ENCODE measurements at regions of chr19 and their contacts with region 1.

Region 1: GRCh38 chr19:18304458-18305310 is 18.2 kb downstream of the LSM4 start:
- DNase-seq: peak; percentile 83 to 97
- H3K4me3 ChIP-seq: peak overlapping the region; percentile 60
- H3K27ac ChIP-seq: peak overlapping the region; percentile 98 to 100
- H3K4me1 ChIP-seq: peaks cover 41 to 77% of the 10 kb centered on the region in 2 donors
- H3K27me3 ChIP-seq: no peaks in the 10 kb centered on the region
- CTCF ChIP-seq: no peak

Region 2: GRCh38 chr19:17215125-17215971 is 1089.3 kb before region 1 on chr19 and contains the start of gene USE1:
- intact Hi-C with region 1: no loop called
- DNase-seq: peak; percentile 66 to 96
- H3K4me3 ChIP-seq: peak within 1 kb of the TSS; percentile 72 to 74
- H3K27ac ChIP-seq: peak within 1 kb of the TSS; percentile 84 to 88
- H3K4me1 ChIP-seq: peaks cover 0 to 17% of the 10 kb centered on the region in 2 donors
- H3K27me3 ChIP-seq: no peaks in the 10 kb centered on the region
- CTCF ChIP-seq: no peak
- total RNA-seq, gene USE1: 234 TPM

Region 3: DNA sequence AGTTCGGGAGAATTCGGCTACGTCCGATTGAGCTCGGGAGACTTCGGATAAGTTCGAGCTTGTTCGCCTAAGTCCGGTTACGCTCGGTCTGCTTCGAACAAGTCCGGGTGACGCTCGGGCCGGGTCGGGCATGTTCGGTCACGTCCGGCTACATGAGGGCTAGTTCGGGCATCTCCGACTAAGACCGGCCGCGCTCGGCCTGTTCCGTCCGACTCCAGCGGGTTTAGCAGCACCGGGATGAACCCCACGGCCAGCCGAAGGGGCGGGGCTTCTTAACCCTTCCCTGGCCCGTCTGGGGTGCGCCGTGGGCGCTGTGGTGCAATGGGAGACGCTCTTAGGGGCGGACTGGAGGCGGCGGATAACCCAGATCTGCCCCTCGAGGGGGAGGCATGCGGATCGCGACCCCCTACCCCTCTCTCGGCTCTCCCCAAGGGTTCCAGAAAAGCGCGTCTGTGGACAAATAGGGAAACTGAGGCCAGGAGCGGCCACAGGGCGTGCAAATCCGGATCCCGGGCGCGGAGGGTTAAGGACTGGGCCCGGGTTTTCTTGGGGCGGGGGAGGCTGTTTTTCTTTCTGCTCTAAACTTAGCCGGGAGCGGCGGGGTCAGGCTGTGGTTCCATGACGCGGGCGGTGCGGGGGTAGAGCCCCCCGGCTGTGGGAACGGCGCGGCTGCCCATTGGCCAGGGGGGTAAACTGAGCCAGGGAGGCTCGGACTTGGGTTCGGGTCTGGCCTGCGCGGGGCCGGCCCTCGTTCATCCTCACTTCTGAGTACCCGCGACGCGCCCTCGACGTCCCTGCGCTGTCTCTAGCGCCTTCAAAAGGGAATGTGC is 79.9 kb before region 1 on chr19:
- intact Hi-C with region 1: no loop called
- DNase-seq: peak; percentile 87 to 99
- H3K4me3 ChIP-seq: peak overlapping the region; percentile 44 to 54
- H3K27ac ChIP-seq: no peak overlapping the region
- H3K4me1 ChIP-seq: peaks cover 7 to 15% of the 10 kb centered on the region in 2 donors
- H3K27me3 ChIP-seq: peaks cover 16% of the 10 kb centered on the region
- CTCF ChIP-seq: no peak

Region 4: DNA sequence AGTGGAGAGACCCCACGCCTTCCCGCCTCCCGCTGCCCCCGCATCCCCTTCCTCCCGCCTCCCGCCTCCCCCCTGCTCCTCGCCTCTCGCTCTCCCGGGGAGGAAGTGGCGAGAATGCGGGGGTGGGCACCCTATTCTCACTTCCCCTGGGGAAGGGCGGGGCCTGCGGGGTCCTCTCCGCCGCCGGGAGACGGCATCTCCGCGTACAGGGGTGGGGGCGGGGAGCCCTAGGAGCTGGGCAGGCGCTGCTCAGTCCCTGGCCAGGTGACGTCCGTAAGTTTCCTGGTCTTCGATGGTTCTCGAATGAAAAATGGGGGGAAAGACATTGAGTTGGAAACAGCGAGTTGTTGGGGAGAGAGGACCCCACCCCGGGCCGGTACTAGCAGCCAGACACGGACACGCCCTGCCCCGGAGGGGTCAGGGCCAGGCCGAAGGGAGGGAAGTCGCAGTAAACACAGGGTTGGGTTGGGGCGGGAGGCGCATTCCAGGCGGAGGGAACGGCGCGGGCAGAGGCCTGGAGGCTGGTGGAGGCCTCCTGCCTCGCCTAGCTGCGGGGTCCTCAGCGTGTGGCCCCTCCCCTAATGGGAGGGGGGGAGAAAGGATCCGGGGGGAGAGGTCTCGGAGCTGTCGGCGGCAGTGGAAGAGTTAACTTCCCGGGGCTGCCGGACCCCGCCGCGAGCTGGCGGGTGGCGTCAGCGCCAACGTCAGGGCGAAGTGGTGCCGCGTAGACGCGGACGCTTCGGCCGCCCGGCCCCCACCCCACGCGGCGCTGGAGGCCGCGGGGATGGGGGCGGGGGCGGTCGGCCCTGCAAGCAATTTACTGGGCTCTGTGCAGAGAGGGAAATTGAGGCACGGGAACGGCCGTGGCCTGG is 12.9 kb before region 1 on chr19:
- intact Hi-C with region 1: loop called (anchors 1 kb)
- DNase-seq: peak; percentile 81 to 94
- H3K4me3 ChIP-seq: peak overlapping the region; percentile 72 to 86
- H3K27ac ChIP-seq: peak overlapping the region; percentile 99
- H3K4me1 ChIP-seq: peaks cover 4 to 28% of the 10 kb centered on the region in 2 donors
- H3K27me3 ChIP-seq: no peaks in the 10 kb centered on the region
- CTCF ChIP-seq: no peak

Region 5: GRCh38 chr19:18322759-18323460 is 18.2 kb after region 1 on chr19 and contains the start of gene LSM4:
- intact Hi-C with region 1: loop called (anchors 1 kb)
- DNase-seq: peak; percentile 90 to 99
- H3K4me3 ChIP-seq: peak within 1 kb of the TSS; percentile 81 to 82
- H3K27ac ChIP-seq: peak within 1 kb of the TSS; percentile 89 to 91
- H3K4me1 ChIP-seq: peaks cover 4 to 19% of the 10 kb centered on the region in 2 donors
- H3K27me3 ChIP-seq: no peaks in the 10 kb centered on the region
- CTCF ChIP-seq: peak in 2 of 3 experiments; percentile 31 to 44
- total RNA-seq, gene LSM4: 62.5 TPM